Endothelial cell of umbilical vein (primary cell): ENCODE measurements at regions of chr17 and their contacts with region 1.

Region 1: GRCh38 chr17:43713494-43714162 is 45.0 kb downstream of the SOST start:
- DNase-seq: peak; percentile 21
- H3K4me3 ChIP-seq: peak overlapping the region; percentile 48 to 53 (median 53)
- H3K27ac ChIP-seq: peak overlapping the region; percentile 6
- H3K4me1 ChIP-seq: peaks cover 16% of the 10 kb centered on the region
- H3K27me3 ChIP-seq: no peaks in the 10 kb centered on the region
- CTCF ChIP-seq: no peak
- POLR2A ChIP-seq: no peak

Region 2: GRCh38 chr17:43760254-43760852 is 46.7 kb after region 1 on chr17:
- CTCF ChIA-PET with region 1: interaction called, 21 read pairs
- POLR2A ChIA-PET with region 1: no interaction called
- dilution Hi-C with region 1: no loop called
- intact Hi-C with region 1: no loop called
- DNase-seq: peak; percentile 93
- H3K4me3 ChIP-seq: no peak overlapping the region
- H3K27ac ChIP-seq: no peak overlapping the region
- H3K4me1 ChIP-seq: peaks cover 2% of the 10 kb centered on the region
- H3K27me3 ChIP-seq: peaks cover 8 to 13% of the 10 kb centered on the region in 2 experiments
- CTCF ChIP-seq: peak; percentile 97 to 100
- POLR2A ChIP-seq: no peak

Region 3: GRCh38 chr17:43814714-43815113 is 101.1 kb after region 1 on chr17:
- CTCF ChIA-PET with region 1: no interaction called
- POLR2A ChIA-PET with region 1: no interaction called
- dilution Hi-C with region 1: no loop called
- intact Hi-C with region 1: no loop called
- DNase-seq: peak; percentile 63
- H3K4me3 ChIP-seq: no peak overlapping the region
- H3K27ac ChIP-seq: peak overlapping the region; percentile 46
- H3K4me1 ChIP-seq: peaks cover 14% of the 10 kb centered on the region
- H3K27me3 ChIP-seq: no peaks in the 10 kb centered on the region
- CTCF ChIP-seq: no peak
- POLR2A ChIP-seq: no peak